Mammary epithelial cell (primary cell): ENCODE measurements at regions of chr1 and their contacts with region 1.

Region 1: GRCh38 chr1:150127868-150128267 is 21.8 kb upstream of the PLEKHO1 start:
- DNase-seq: no peak
- H3K4me3 ChIP-seq: no peak overlapping the region
- H3K27ac ChIP-seq: no peak overlapping the region
- H3K4me1 ChIP-seq: no peaks in the 10 kb centered on the region
- H3K27me3 ChIP-seq: no peaks in the 10 kb centered on the region
- CTCF ChIP-seq: no peak

Region 2: GRCh38 chr1:150083907-150084306 is 44.0 kb before region 1 on chr1:
- CTCF ChIA-PET with region 1: no interaction called
- dilution Hi-C with region 1: loop called (anchors 5 kb)
- in situ Hi-C with region 1: no loop called
- intact Hi-C with region 1: no loop called
- DNase-seq: no peak
- H3K4me3 ChIP-seq: no peak overlapping the region
- H3K27ac ChIP-seq: no peak overlapping the region
- H3K4me1 ChIP-seq: no peaks in the 10 kb centered on the region
- H3K27me3 ChIP-seq: no peaks in the 10 kb centered on the region
- CTCF ChIP-seq: no peak